H1 (cell line): ENCODE measurements at regions of chr12 and their contacts with region 1.

Region 1: DNA sequence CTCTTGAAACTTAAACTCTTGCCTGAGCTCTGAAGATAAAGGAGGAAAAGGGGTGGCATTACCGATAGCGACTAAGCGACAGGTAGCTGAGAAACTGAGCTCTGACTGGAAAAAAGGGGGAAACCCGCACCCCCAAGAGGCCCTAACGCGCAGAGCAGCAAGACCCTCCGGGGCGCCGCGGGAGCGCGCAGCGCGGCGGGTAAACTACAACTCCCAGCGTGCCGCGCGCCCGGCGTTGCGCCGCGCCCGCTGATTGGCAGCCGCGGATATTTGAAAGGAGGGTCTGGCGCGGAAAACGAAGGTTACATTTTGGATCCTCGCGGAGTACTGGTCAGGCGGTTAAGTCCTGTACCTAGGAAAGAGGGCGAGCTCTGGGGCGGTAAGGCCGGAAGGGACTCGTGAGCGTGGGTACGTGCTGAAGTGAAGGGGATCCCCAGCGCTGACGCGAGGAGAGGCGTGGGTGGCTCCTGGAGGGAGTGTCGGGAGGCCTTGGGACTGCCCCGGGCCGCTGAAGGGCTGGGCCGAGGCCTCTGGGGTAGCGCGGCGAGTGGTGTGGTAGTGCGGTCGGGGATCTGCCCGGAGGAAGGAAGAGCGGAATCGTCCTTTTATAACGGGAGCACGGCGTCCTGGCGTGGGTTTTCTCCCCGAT is at the start of gene ESPL1:
- DNase-seq: peak; percentile 54 to 92
- H3K4me3 ChIP-seq: peak within 1 kb of the TSS; percentile 82 to 97 (median 90)
- H3K27ac ChIP-seq: no peak within 1 kb of the TSS
- H3K4me1 ChIP-seq: peaks cover 3 to 11% (median 5%) of the 10 kb centered on the region in 4 experiments; a peak in 5 of 7 replicates
- H3K27me3 ChIP-seq: peaks cover 0 to 2% (median 0%) of the 10 kb centered on the region in 4 experiments; a peak in 1 of 7 replicates
- CTCF ChIP-seq: peak; percentile 41 to 61 (median 50)
- EP300 ChIP-seq: no peak
- POLR2A ChIP-seq: no peak
- RAD21 ChIP-seq: peak; percentile 63 to 69
- total RNA-seq, gene ESPL1: 47.0 and 52.7 TPM in 2 replicates

Region 2: GRCh38 chr12:53220801-53221202 is 47.3 kb before region 1 on chr12:
- CTCF ChIA-PET with region 1: interaction called, 654 read pairs
- POLR2A ChIA-PET with region 1: interaction called, 113 read pairs
- DNase-seq: peak in 1 of 2 experiments; percentile 92
- H3K4me3 ChIP-seq: peak overlapping the region; percentile 76 to 97 (median 86)
- H3K27ac ChIP-seq: no peak overlapping the region
- H3K4me1 ChIP-seq: peaks cover 39 to 69% (median 56%) of the 10 kb centered on the region in 4 experiments
- H3K27me3 ChIP-seq: peaks cover 0 to 3% (median 0%) of the 10 kb centered on the region in 4 experiments; a peak in 1 of 7 replicates
- CTCF ChIP-seq: no peak
- EP300 ChIP-seq: no peak
- POLR2A ChIP-seq: no peak
- RAD21 ChIP-seq: no peak

Region 3: GRCh38 chr12:53241623-53242412 is 26.3 kb before region 1 on chr12:
- CTCF ChIA-PET with region 1: interaction called, 68 read pairs
- POLR2A ChIA-PET with region 1: interaction called, 8 read pairs
- DNase-seq: no peak
- H3K4me3 ChIP-seq: no peak overlapping the region
- H3K27ac ChIP-seq: no peak overlapping the region
- H3K4me1 ChIP-seq: peaks cover 0 to 13% (median 8%) of the 10 kb centered on the region in 4 experiments; a peak in 6 of 7 replicates
- H3K27me3 ChIP-seq: no peaks in the 10 kb centered on the region; a peak in 1 of 7 replicates
- CTCF ChIP-seq: no peak
- EP300 ChIP-seq: no peak
- POLR2A ChIP-seq: no peak
- RAD21 ChIP-seq: no peak

Region 4: DNA sequence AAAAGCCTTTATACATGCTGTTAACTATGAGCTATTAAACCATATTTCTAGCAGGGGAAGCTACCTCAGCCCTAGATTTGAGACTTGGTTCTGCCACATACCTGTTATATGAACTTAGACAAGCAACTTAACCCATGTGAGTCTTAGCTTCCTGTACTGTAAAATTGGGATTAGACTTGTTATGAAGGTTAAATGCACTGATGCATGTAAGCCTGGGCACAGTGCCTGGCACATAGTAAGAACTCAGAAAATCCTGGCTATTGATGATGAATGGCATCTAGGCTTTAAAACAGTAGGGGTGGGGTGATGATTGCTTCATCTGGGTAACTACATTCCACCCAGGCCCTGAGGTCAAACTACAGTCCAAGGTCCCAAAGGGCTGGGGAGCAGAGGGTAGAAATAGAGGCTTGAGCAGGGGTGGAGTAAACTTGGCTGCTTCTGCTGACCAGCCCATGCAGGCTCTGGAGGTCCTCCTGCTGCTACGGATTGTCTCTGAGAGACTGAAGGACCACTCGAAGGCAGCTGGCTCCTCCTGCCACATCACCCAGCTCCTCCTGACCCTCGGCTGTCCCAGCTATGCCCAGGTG is 11.3 kb after region 1 on chr12:
- CTCF ChIA-PET with region 1: interaction called, 179 read pairs
- POLR2A ChIA-PET with region 1: interaction called, 29 read pairs
- DNase-seq: no peak
- H3K4me3 ChIP-seq: no peak overlapping the region
- H3K27ac ChIP-seq: no peak overlapping the region
- H3K4me1 ChIP-seq: no peaks in the 10 kb centered on the region
- H3K27me3 ChIP-seq: no peaks in the 10 kb centered on the region
- CTCF ChIP-seq: no peak
- EP300 ChIP-seq: no peak
- POLR2A ChIP-seq: no peak
- RAD21 ChIP-seq: no peak

Region 5: GRCh38 chr12:53427905-53428594 is 159.9 kb after region 1 on chr12:
- CTCF ChIA-PET with region 1: no interaction called
- POLR2A ChIA-PET with region 1: no interaction called
- DNase-seq: no peak
- H3K4me3 ChIP-seq: no peak overlapping the region
- H3K27ac ChIP-seq: no peak overlapping the region
- H3K4me1 ChIP-seq: no peaks in the 10 kb centered on the region
- H3K27me3 ChIP-seq: no peaks in the 10 kb centered on the region
- CTCF ChIP-seq: no peak
- EP300 ChIP-seq: no peak
- POLR2A ChIP-seq: no peak
- RAD21 ChIP-seq: no peak